Aorta (tissue), 5 donors: ENCODE measurements at regions of chr6 and their contacts with region 1.

Region 1: DNA sequence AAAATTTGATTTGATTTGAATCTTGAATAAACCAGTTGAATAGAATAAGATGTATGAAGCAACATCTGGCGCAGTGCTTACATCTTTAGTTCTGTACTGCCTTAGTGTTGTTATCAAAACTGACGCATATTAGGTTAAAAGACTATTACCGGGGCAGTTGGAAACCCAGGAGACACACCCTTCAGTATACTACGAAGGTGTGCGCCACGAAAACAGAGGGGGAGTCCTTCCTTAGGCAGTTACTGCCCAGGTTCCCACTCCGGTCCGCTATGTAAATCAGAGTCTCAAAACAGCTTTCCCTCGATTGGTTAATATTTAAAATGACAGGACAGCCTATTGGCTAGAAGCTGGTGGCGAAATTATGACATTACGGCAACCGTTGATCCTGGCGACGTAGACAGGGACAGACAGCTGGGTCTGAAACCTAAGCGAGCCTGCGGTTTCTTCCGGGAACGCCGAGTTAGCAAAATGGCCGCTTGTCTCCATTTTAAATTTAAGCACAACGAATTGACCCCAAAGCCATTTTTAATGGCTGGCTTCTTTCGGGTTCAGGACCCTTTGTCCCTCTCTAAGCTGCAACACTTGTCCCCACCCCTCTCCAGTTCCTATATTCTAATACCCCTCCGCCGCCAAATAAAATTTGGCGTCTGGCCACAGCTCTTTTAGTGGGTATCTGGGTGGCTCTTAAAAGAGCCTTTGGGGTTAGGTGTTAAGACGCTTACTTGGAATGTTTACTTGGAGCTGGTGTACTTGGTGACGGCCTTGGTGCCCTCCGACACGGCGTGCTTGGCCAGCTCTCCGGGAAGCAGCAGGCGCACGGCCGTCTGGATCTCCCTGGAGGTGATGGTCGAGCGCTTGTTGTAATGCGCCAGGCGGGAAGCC is 35.8 kb downstream of the HFE start:
- DNase-seq: peak; percentile 92 to 96
- ATAC-seq: peak; percentile 93
- H3K4me3 ChIP-seq: peak overlapping the region; percentile 80 to 94
- H3K27ac ChIP-seq: peak overlapping the region; percentile 72 to 100
- H3K4me1 ChIP-seq: no peaks in the 10 kb centered on the region
- H3K27me3 ChIP-seq: no peaks in the 10 kb centered on the region

Region 2: GRCh38 chr6:26103770-26104456 is 19.1 kb before region 1 on chr6:
- intact Hi-C with region 1: loop called in 1 of 2 experiments (anchors 1 kb)
- DNase-seq: peak; percentile 91 to 92
- ATAC-seq: peak; percentile 97
- H3K4me3 ChIP-seq: peak overlapping the region; percentile 43 to 92
- H3K27ac ChIP-seq: peak overlapping the region; percentile 86 to 88
- H3K4me1 ChIP-seq: no peaks in the 10 kb centered on the region
- H3K27me3 ChIP-seq: peaks cover 0 to 4% of the 10 kb centered on the region in 2 donors

Region 3: DNA sequence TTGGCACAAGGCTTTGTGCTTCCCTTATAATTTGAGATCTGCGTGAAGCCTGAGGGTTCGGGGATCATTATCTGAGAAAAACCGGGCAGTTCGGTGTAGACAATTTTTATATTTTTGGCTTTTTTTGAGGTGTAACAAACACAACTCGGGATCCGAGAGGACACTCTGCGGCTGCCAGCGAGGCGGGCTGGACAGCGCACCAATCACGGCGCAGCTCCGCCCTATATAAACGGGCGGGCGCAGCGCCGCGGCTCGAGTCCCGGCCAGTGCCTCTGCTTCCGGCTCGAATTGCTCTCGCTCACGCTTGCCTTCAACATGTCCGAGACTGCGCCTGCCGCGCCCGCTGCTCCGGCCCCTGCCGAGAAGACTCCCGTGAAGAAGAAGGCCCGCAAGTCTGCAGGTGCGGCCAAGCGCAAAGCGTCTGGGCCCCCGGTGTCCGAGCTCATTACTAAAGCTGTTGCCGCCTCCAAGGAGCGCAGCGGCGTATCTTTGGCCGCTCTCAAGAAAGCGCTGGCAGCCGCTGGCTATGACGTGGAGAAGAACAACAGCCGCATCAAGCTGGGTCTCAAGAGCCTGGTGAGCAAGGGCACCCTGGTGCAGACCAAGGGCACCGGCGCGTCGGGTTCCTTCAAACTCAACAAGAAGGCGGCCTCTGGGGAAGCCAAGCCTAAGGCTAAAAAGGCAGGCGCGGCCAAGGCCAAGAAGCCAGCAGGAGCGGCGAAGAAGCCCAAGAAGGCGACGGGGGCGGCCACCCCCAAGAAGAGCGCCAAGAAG is 33.2 kb after region 1 on chr6:
- intact Hi-C with region 1: loop called (anchors 1 to 2 kb)
- DNase-seq: peak; percentile 93 to 96
- ATAC-seq: peak; percentile 94
- H3K4me3 ChIP-seq: peak overlapping the region; percentile 78 to 96
- H3K27ac ChIP-seq: peak overlapping the region; percentile 93 to 99
- H3K4me1 ChIP-seq: peaks cover 0 to 4% of the 10 kb centered on the region in 2 donors
- H3K27me3 ChIP-seq: peaks cover 0 to 4% of the 10 kb centered on the region in 2 donors

Region 4: GRCh38 chr6:26175428-26176181 is 52.6 kb after region 1 on chr6:
- intact Hi-C with region 1: loop called in 1 of 2 experiments (anchors 5 kb)
- DNase-seq: no peak
- ATAC-seq: no peak
- H3K4me3 ChIP-seq: no peak overlapping the region
- H3K27ac ChIP-seq: no peak overlapping the region
- H3K4me1 ChIP-seq: peaks cover 0 to 1% of the 10 kb centered on the region in 2 donors
- H3K27me3 ChIP-seq: no peaks in the 10 kb centered on the region

Region 5: GRCh38 chr6:26196846-26197648 is 74.0 kb after region 1 on chr6:
- intact Hi-C with region 1: loop called (anchors 5 kb)
- DNase-seq: peak; percentile 84 to 90
- ATAC-seq: peak; percentile 83
- H3K4me3 ChIP-seq: peak overlapping the region; percentile 33 to 72
- H3K27ac ChIP-seq: peak overlapping the region; percentile 31 to 98
- H3K4me1 ChIP-seq: no peaks in the 10 kb centered on the region
- H3K27me3 ChIP-seq: peaks cover 0 to 2% of the 10 kb centered on the region in 2 donors

Region 6: DNA sequence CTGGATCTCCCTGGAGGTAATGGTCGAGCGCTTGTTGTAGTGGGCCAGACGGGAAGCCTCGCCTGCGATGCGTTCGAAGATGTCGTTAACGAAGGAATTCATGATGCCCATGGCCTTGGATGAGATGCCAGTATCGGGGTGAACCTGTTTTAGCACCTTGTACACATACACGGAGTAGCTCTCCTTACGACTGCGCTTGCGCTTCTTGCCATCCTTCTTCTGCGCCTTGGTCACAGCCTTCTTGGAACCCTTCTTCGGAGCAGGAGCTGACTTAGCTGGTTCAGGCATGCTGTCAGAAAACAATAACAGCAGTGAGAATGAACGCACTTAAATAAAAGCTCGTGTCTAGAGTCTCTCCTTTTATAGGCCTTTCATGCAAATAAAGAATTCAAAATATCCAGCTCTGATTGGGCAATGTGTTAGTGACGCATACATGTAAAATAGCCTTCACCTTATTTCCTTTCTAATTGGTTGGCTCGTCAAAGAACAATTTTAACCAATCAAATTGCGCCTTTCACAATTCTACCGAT is 93.4 kb after region 1 on chr6:
- intact Hi-C with region 1: loop called in 1 of 2 experiments (anchors 5 kb)
- DNase-seq: peak; percentile 80 to 82
- ATAC-seq: peak; percentile 92
- H3K4me3 ChIP-seq: peak overlapping the region; percentile 44 to 56
- H3K27ac ChIP-seq: peak overlapping the region; percentile 87 to 94
- H3K4me1 ChIP-seq: no peaks in the 10 kb centered on the region
- H3K27me3 ChIP-seq: no peaks in the 10 kb centered on the region

Region 7: DNA sequence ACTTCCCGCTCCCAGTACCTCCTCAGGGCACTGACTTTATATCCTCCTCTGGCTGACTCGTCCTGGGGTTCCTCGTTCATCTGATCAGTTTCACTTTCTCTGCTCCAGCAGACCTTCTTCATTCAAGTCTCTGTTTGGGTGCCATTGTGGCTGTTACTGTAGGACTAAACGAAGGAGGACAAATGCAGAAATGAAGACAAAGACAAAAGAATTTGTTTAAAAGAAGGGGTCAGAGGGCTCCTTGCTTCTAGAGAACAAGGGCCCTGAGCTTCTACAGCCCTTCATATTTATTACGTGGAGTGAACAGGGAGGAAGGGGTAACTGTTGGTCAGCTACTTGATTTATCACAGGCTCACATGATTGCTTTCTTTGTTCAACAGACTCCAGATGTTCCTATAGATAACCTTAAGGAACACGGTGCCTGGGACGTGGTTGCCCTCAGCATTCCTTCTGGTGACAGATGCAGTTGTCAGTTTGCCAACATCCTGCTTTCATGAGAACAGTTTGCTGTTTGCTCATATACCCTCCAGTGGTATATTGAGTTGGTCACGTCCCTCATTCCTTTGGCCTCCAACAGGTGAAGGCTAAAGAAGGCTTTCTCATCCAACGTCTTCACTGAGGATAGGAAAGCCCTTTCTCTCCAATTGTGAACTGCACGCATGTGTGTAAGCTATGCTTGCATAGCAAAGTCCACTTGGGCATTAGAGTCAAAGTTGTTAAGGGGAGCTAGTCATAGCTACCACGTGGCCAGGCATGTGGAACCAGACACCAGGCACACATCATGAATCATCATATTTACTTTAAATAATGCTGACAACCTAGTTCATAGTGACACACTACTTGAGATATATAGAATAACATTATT is 172.9 kb after region 1 on chr6:
- intact Hi-C with region 1: no loop called
- DNase-seq: no peak
- ATAC-seq: no peak
- H3K4me3 ChIP-seq: no peak overlapping the region
- H3K27ac ChIP-seq: no peak overlapping the region
- H3K4me1 ChIP-seq: no peaks in the 10 kb centered on the region
- H3K27me3 ChIP-seq: no peaks in the 10 kb centered on the region